Activated CD4-positive, alpha-beta T cell treated with anti-CD3 and anti-CD28 coated beads for 36 hours (primary cell): ENCODE measurements at regions of chr12 and their contacts with region 1.

Region 1: GRCh38 chr12:100668945-100669536 is 95.6 kb downstream of the GAS2L3 start:
- DNase-seq: peak; percentile 79
- ATAC-seq: peak; percentile 51
- H3K4me3 Mint-ChIP-seq: no peak overlapping the region
- H3K27ac Mint-ChIP-seq: no peak overlapping the region
- H3K4me1 Mint-ChIP-seq: no peaks in the 10 kb centered on the region
- H3K27me3 Mint-ChIP-seq: peaks cover 9% of the 10 kb centered on the region

Region 2: GRCh38 chr12:100348657-100349454 is 320.2 kb before region 1 on chr12:
- CTCF ChIA-PET with region 1: no interaction called
- POLR2A ChIA-PET with region 1: no interaction called
- intact Hi-C with region 1: loop called in 1 of 2 experiments (anchors 10 kb)
- DNase-seq: no peak
- ATAC-seq: no peak
- H3K4me3 Mint-ChIP-seq: no peak overlapping the region
- H3K27ac Mint-ChIP-seq: no peak overlapping the region
- H3K4me1 Mint-ChIP-seq: no peaks in the 10 kb centered on the region
- H3K27me3 Mint-ChIP-seq: peaks cover 4% of the 10 kb centered on the region

Region 3: GRCh38 chr12:100741084-100741711 is 72.2 kb after region 1 on chr12:
- CTCF ChIA-PET with region 1: no interaction called
- POLR2A ChIA-PET with region 1: no interaction called
- intact Hi-C with region 1: loop called (anchors 1 to 2 kb)
- DNase-seq: no peak
- ATAC-seq: no peak
- H3K4me3 Mint-ChIP-seq: no peak overlapping the region
- H3K27ac Mint-ChIP-seq: no peak overlapping the region
- H3K4me1 Mint-ChIP-seq: no peaks in the 10 kb centered on the region
- H3K27me3 Mint-ChIP-seq: peaks cover 5% of the 10 kb centered on the region